ENCODE measurements at regions of chr1 and their contacts with region 1.

Region 1: DNA sequence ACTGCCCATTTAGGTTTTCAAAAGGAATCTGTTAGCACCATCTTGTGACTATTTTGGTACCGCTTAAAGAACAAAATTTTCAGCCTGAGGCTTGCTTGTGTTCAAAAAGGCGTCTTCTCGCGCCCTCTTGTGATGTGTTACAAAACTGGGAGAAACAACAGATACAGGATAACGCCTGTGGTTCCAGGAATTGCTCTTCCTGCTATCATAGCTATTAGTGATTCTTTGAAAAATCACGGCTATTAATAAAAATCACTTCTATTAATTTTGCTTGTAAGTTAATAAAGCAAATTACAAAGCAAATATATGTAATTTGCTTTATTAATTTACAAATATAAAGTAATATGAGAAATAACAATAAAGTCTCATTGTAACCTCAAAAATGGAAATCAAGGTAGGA is 82.2 kb upstream of the ABCD3 start:
- DNase-seq: peak; percentile 48
- ATAC-seq: peak; percentile 92
- H3K4me3 Mint-ChIP-seq: no peak overlapping the region
- H3K27ac Mint-ChIP-seq: no peak overlapping the region
- H3K4me1 Mint-ChIP-seq: peaks cover 8% of the 10 kb centered on the region
- H3K27me3 Mint-ChIP-seq: peaks cover 2% of the 10 kb centered on the region; the same call in 1 of the 2 replicates
- CTCF ChIP-seq: 0 out of 2 replicates have a peak, but pooled peaks have one; percentile 21

Region 2: GRCh38 chr1:94033849-94034248 is 302.1 kb before region 1 on chr1:
- CTCF ChIA-PET with region 1: interaction called, 103 read pairs
- POLR2A ChIA-PET with region 1: no interaction called
- DNase-seq: no peak
- ATAC-seq: no peak
- H3K4me3 Mint-ChIP-seq: no peak overlapping the region
- H3K27ac Mint-ChIP-seq: no peak overlapping the region
- H3K4me1 Mint-ChIP-seq: peaks cover 15% of the 10 kb centered on the region
- H3K27me3 Mint-ChIP-seq: peaks cover 5% of the 10 kb centered on the region; the same call in 1 of the 2 replicates
- CTCF ChIP-seq: no peak

Region 3: DNA sequence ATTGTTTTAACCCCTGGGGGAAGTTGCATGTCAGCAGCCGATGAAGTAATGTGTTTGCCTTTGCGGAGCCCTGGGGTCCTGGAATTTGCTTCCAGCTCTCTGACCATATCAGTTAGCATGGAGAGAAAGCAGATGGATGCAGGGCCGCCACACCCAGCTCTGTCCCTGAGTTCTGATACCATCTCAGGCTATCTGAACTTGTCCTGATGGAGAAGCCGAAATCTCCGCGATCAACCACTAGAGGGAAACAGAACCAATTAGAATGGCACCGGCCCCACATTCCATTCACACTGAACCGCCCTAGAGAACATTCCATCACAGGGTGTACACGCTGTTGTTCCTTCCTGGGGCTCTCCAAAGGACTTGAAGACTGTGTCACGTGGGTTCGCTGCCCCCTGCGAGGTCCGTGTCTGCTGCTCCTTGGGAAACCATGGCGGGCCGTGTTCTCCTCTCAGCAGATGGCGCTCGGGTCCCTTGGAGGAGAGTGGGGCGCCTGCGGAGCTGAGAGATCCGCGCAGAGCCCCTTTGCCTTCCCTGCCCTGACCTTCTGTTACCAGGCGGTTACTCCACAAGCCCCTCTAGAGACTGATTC is 290.4 kb before region 1 on chr1:
- CTCF ChIA-PET with region 1: interaction called, 175 read pairs
- POLR2A ChIA-PET with region 1: no interaction called
- DNase-seq: peak; percentile 90
- ATAC-seq: peak; percentile 85
- H3K4me3 Mint-ChIP-seq: peak overlapping the region; percentile 52
- H3K27ac Mint-ChIP-seq: no peak overlapping the region
- H3K4me1 Mint-ChIP-seq: peaks cover 30% of the 10 kb centered on the region
- H3K27me3 Mint-ChIP-seq: no peaks in the 10 kb centered on the region
- CTCF ChIP-seq: peak; percentile 46

Region 4: GRCh38 chr1:94237291-94238226 is 98.4 kb before region 1 on chr1 and contains the start of gene ARHGAP29:
- CTCF ChIA-PET with region 1: interaction called, 36 read pairs
- POLR2A ChIA-PET with region 1: no interaction called
- DNase-seq: peak; percentile 92
- ATAC-seq: peak; percentile 89
- H3K4me3 Mint-ChIP-seq: peak within 1 kb of the TSS; percentile 79
- H3K27ac Mint-ChIP-seq: peak within 1 kb of the TSS; percentile 41; the same call in 1 of the 2 replicates
- H3K4me1 Mint-ChIP-seq: peaks cover 24% of the 10 kb centered on the region
- H3K27me3 Mint-ChIP-seq: peaks cover 65% of the 10 kb centered on the region
- CTCF ChIP-seq: no peak
- total RNA-seq, gene ARHGAP29: 3.5 to 6.6 TPM (median 4.4 TPM) in 3 replicates

Region 5: DNA sequence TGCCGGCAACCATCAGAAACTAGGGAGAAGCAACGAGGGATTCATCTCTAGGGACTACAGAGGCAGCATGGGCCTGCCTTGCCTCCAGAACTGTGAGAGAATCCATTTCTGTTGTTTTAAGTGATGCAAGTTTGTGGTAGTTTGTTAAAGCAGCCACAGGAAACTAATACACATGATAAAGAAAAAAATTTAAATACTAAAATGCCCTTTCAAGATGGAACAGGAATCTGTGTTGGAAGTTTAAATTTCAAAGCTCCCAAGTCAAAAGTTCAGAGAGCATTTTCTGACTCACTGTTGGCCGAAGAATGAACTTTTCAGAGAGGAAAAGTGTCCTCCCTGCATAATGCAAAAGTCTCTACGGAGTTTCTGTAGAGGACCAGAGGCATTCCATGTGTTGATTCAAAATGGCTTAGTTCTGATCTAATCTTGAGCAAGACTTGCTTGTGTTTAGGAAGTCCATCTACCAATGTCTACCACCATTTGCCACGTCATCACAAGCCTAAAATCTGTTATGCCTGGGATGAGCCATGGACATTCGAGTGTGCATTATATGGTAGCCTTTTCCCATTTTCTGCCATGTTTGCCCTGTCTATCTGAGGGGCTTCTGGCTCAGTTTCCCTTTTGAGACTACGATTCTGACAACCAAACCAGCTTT is 76.2 kb before region 1 on chr1:
- CTCF ChIA-PET with region 1: interaction called, 21 read pairs
- POLR2A ChIA-PET with region 1: no interaction called
- DNase-seq: peak; percentile 14
- ATAC-seq: peak; percentile 94
- H3K4me3 Mint-ChIP-seq: no peak overlapping the region
- H3K27ac Mint-ChIP-seq: no peak overlapping the region
- H3K4me1 Mint-ChIP-seq: peaks cover 11% of the 10 kb centered on the region
- H3K27me3 Mint-ChIP-seq: peaks cover 98% of the 10 kb centered on the region
- CTCF ChIP-seq: no peak